Dorsolateral prefrontal cortex (tissue), 120 donors: ENCODE measurements at regions of chr16 and their contacts with region 1.

Region 1: DNA sequence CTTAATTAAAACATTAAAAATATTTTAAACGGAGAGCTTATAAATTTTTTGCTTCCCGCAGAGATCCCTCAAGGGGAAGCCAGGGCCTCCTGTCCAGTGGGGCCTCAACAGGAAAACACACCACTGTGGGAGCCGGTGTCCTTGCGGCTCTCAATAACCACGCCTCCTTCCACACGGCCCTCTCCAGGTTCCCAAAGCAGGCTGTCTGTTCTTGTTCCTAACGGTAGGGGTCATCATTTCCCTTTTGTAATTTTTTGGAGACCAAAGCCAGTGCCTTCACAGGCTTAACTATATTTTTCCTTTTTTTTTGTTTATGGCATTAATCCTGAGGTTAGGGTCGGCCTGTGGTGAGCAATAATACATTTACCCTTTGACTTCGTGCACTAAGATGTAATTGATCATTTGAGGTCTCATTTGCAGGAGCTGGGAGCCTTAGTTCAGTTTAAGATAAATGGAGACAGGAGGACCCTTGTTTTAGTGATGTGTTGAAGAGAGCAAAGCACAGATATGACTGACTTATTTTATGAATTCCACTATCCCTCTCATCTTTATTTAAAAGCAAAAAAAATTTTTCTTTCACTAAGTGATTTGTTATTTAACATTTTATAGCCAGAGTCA is 77.5 kb upstream of the N4BP1 start:
- DNase-seq: peak in 8 of 10 donors; percentile 6 to 65 (median 36)
- H3K4me3 ChIP-seq: no peak overlapping the region
- H3K27ac ChIP-seq: no peak overlapping the region
- H3K27me3 ChIP-seq: peaks cover 0 to 33% (median 0%) of the 10 kb centered on the region in 45 donors
- CTCF ChIP-seq: peak; percentile 54 to 94 (median 82)

Region 2: GRCh38 chr16:49281843-49282642 is 594.5 kb after region 1 on chr16:
- intact Hi-C with region 1: loop called in 1 of 2 experiments (anchors 5 kb)
- DNase-seq: peak; percentile 82 to 96 (median 86)
- H3K4me3 ChIP-seq: peak overlapping the region; percentile 47 to 82 (median 70)
- H3K27ac ChIP-seq: peak overlapping the region in 33 of 59 donors; percentile 28 to 92 (median 79)
- H3K27me3 ChIP-seq: peaks cover 4 to 94% (median 71%) of the 10 kb centered on the region in 45 donors
- CTCF ChIP-seq: peak in 53 of 56 donors; percentile 12 to 75 (median 51)

Region 3: DNA sequence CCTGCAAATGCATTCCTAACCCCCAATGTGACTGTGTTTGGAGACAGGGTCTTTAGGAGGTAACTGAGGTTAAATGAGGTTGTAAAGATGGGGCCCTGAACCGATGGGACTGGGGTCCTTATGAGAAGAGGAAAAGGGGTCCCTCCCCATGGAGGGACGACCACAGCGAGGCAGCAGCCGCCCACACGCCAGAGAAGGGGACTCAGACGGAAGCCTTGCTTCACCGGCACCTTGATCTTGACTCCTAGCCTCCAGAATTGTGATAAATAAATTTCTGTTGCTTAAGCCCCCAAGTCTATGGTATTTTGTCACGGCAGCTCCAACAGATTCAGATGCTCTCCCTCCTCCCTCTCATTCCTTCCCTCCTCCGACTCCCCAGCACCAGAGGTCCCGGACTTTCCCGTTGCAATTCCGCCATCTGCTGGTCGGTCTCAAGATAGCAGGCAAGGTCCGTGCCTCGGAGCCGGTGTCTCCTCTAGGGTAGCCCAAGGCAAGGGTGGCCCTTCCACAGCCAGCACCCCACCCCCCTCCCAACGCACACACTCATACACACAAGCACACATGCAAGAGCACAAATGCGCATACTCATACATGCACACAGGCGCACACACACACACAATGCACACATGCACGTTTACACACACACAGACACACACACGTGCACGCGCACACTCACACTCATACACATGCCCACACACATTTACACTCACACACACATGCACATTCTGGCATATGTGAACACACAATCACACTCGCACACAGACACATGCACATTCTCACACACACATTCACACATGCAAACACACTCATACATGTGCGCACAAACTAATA is 663.0 kb after region 1 on chr16:
- intact Hi-C with region 1: loop called (anchors 1 to 2 kb)
- DNase-seq: peak; percentile 55 to 91 (median 78)
- H3K4me3 ChIP-seq: no peak overlapping the region
- H3K27ac ChIP-seq: peak overlapping the region in 1 of 59 donors; percentile 34
- H3K27me3 ChIP-seq: peaks cover 0 to 74% (median 23%) of the 10 kb centered on the region in 45 donors
- CTCF ChIP-seq: peak; percentile 54 to 96 (median 88)